PC-3 (cell line): ENCODE measurements at regions of chr10 and their contacts with region 1.

Region 1: DNA sequence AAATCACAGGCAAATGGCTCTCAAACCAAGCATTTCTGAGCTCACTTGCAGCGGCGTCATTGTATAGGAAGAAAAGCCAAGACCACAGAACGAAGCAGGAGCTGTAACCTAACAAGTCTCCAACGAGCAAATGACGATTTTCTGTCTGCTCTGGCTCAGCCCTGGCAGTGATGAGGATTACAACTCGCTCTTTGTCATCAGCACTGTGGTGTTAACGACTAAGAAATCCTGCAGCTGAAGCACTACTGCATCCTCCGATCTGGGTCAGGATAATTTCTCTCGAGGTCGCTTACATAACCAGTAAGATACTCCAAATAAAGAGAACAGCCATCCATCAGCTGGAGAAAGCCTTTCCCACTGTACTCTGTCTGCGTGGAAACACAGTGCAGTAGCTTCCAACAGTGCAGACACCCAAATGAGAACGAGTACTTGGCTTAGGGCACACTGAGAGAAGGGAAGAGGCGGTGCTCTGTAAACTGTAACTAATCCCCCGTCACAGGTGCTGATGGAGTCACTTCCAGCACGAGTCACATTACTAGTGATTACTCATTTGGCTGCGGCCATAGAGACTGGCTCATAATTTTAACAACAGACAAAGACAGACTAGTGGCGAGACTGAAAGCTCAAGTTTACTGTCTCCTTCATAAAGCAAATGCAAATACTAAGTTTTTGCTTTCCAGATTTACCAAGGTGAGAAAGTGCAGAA is 135.8 kb downstream of the NRBF2 start:
- DNase-seq: peak; percentile 100
- ATAC-seq: peak; percentile 90
- H3K4me3 ChIP-seq: peak overlapping the region; percentile 69
- H3K27ac ChIP-seq: peak overlapping the region; percentile 76
- H3K4me1 ChIP-seq: peaks cover 38% of the 10 kb centered on the region
- H3K27me3 ChIP-seq: no peaks in the 10 kb centered on the region
- CTCF ChIP-seq: peak; percentile 63

Region 2: DNA sequence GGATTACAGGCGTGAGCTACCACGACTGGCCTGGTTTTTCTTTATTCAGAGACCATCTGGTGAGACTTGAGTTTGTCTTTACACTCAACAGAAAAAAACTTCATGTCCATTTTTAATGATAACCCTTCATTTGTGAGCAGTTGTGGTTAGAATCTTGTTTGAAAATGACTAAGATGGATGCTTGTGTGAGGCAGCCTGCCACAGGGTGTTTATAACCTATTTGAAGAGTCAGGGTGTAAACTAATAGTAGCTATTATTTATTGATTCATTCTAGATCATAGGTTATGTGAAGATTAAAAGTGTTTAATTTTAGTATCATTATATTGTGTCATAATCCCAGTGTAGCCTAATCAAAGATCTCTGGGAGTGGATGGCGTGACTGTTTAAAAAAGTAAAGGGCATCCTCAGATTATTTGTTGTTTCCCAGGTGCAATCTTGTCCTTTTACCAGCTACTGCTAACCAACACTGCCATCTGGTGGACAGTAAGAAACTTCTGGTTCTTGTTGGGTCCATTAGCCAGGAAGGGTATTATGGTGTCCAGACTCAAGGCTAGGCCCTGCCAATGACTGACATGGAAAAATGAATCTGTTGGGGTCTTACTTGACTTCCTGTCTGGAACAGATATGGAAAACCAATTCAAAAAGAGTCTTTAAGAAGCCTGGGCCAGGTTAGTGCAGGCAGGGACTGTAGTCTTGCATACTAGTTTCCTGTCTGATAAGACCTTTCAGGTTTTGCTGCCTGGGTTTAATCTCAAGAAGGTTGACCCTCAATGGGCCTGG is 110.9 kb before region 1 on chr10:
- CTCF ChIA-PET with region 1: no interaction called
- POLR2A ChIA-PET with region 1: no interaction called
- intact Hi-C with region 1: no loop called
- DNase-seq: peak; percentile 99
- ATAC-seq: peak; percentile 80
- H3K4me3 ChIP-seq: no peak overlapping the region
- H3K27ac ChIP-seq: peak overlapping the region; percentile 17
- H3K4me1 ChIP-seq: peaks cover 7% of the 10 kb centered on the region; the same call in 1 of the 2 replicates
- H3K27me3 ChIP-seq: no peaks in the 10 kb centered on the region
- CTCF ChIP-seq: peak; percentile 100

Region 3: GRCh38 chr10:63236113-63236935 is 32.6 kb before region 1 on chr10:
- CTCF ChIA-PET with region 1: interaction called, 4 read pairs
- POLR2A ChIA-PET with region 1: interaction called, 13 read pairs
- intact Hi-C with region 1: loop called (anchors 1 kb)
- DNase-seq: peak; percentile 100
- ATAC-seq: peak; percentile 93
- H3K4me3 ChIP-seq: peak overlapping the region; percentile 41
- H3K27ac ChIP-seq: peak overlapping the region; percentile 86
- H3K4me1 ChIP-seq: peaks cover 56% of the 10 kb centered on the region
- H3K27me3 ChIP-seq: no peaks in the 10 kb centered on the region
- CTCF ChIP-seq: no peak

Region 4: GRCh38 chr10:63431962-63432797 is 163.2 kb after region 1 on chr10:
- CTCF ChIA-PET with region 1: no interaction called
- POLR2A ChIA-PET with region 1: interaction called, 8 read pairs
- intact Hi-C with region 1: loop called (anchors 2 kb)
- DNase-seq: peak; percentile 98
- ATAC-seq: peak; percentile 55
- H3K4me3 ChIP-seq: no peak overlapping the region
- H3K27ac ChIP-seq: peak overlapping the region; percentile 71
- H3K4me1 ChIP-seq: peaks cover 65% of the 10 kb centered on the region
- H3K27me3 ChIP-seq: no peaks in the 10 kb centered on the region
- CTCF ChIP-seq: no peak

Region 5: GRCh38 chr10:63521416-63522276 is 252.7 kb after region 1 on chr10:
- CTCF ChIA-PET with region 1: no interaction called
- POLR2A ChIA-PET with region 1: interaction called, 8 read pairs
- intact Hi-C with region 1: loop called (anchors 2 kb)
- DNase-seq: peak; percentile 94
- ATAC-seq: peak; percentile 58
- H3K4me3 ChIP-seq: peak overlapping the region; percentile 75
- H3K27ac ChIP-seq: peak overlapping the region; percentile 85
- H3K4me1 ChIP-seq: peaks cover 65% of the 10 kb centered on the region
- H3K27me3 ChIP-seq: no peaks in the 10 kb centered on the region
- CTCF ChIP-seq: no peak

Region 6: GRCh38 chr10:63588436-63589167 is 319.7 kb after region 1 on chr10:
- CTCF ChIA-PET with region 1: no interaction called
- POLR2A ChIA-PET with region 1: interaction called, 3 read pairs
- intact Hi-C with region 1: loop called (anchors 5 kb)
- DNase-seq: peak; percentile 93
- ATAC-seq: peak; percentile 79
- H3K4me3 ChIP-seq: peak overlapping the region; percentile 2; the same call in 1 of the 2 replicates
- H3K27ac ChIP-seq: peak overlapping the region; percentile 44
- H3K4me1 ChIP-seq: peaks cover 31% of the 10 kb centered on the region
- H3K27me3 ChIP-seq: no peaks in the 10 kb centered on the region
- CTCF ChIP-seq: no peak

Region 7: DNA sequence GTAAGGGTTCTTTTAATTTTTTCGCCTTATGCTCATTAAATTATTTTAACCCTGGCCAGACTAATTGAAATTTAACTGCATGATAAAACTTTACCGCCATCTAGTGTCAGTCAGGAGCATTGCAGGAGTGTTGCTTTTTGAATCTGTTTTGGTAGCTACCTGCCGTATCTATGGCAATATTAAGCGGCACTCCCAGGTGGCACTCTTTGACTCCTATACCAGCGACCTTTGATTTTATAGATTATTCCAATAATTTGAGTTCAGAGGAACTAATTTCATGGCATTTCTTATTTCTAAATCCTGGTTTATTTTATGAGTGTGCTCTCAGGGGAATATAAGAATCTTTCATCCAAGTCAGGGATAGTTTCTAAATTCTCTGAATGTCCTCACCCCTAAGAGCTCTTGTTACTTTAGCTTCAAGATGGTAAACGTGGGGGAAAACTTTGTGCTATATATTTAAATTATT is 451.2 kb after region 1 on chr10:
- CTCF ChIA-PET with region 1: interaction called, 4 read pairs
- POLR2A ChIA-PET with region 1: interaction called, 5 read pairs
- intact Hi-C with region 1: loop called (anchors 2 kb)
- DNase-seq: peak; percentile 97
- ATAC-seq: peak; percentile 53
- H3K4me3 ChIP-seq: no peak overlapping the region
- H3K27ac ChIP-seq: no peak overlapping the region
- H3K4me1 ChIP-seq: peaks cover 29% of the 10 kb centered on the region
- H3K27me3 ChIP-seq: no peaks in the 10 kb centered on the region
- CTCF ChIP-seq: peak; percentile 100